Naive thymus-derived CD4-positive, alpha-beta T cell (primary cell): ENCODE measurements at regions of chr2 and their contacts with region 1.

Region 1: GRCh38 chr2:191189112-191189635 is 38.4 kb upstream of the STAT4 start:
- DNase-seq: peak in 3 of 9 donors; percentile 13 to 20 (median 14)
- ATAC-seq: no peak
- H3K4me3 ChIP-seq: peak overlapping the region; percentile 40
- H3K4me3 Mint-ChIP-seq: peak overlapping the region; percentile 70 to 91 (median 83)
- H3K27ac ChIP-seq: peak overlapping the region; percentile 21
- H3K27ac Mint-ChIP-seq: peak overlapping the region; percentile 59 to 95 (median 91)
- H3K4me1 ChIP-seq: peaks cover 19 to 20% of the 10 kb centered on the region in 2 donors
- H3K4me1 Mint-ChIP-seq: peaks cover 17 to 69% (median 61%) of the 10 kb centered on the region in 7 donors
- H3K27me3 ChIP-seq: no peaks in the 10 kb centered on the region
- H3K27me3 Mint-ChIP-seq: no peaks in the 10 kb centered on the region

Region 2: DNA sequence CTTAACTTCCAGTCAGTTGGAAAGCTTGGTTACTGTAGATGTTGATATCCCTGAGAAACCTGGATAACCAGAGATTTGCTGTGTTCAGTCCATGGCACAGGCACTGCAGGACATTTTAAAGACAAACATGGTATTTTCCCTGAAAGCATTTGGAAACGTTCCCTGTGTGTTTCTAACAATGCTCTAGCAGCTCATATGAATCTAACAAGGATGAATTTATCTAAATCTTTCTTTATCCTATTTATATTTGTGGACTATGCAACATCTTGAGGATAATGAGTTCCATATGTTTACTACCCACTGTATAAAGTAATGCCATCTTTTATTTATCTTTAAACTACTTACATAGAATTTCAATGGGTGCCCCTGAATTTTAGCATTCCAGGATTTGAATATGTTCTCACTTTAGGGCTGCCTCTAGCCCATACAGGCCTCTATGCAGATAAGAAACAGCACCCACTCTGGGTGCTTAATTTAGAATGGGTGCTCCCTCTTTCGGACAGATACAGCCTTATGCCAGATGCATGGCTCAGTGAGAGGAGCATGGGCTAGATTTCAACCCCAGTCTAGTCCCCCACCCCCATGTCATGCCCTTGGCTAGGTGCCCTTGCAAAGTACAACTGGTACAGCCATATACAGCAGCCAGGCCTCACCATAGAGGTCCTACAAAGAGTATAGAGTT is 604.1 kb before region 1 on chr2:
- CTCF ChIA-PET with region 1: no interaction called
- POLR2A ChIA-PET with region 1: no interaction called
- intact Hi-C with region 1: no loop called
- DNase-seq: no peak
- ATAC-seq: no peak
- H3K4me3 ChIP-seq: no peak overlapping the region
- H3K4me3 Mint-ChIP-seq: no peak overlapping the region
- H3K27ac ChIP-seq: no peak overlapping the region
- H3K27ac Mint-ChIP-seq: no peak overlapping the region
- H3K4me1 ChIP-seq: no peaks in the 10 kb centered on the region
- H3K4me1 Mint-ChIP-seq: no peaks in the 10 kb centered on the region
- H3K27me3 ChIP-seq: no peaks in the 10 kb centered on the region
- H3K27me3 Mint-ChIP-seq: no peaks in the 10 kb centered on the region

Region 3: GRCh38 chr2:191171708-191172355 is 17.3 kb before region 1 on chr2:
- CTCF ChIA-PET with region 1: no interaction called
- POLR2A ChIA-PET with region 1: no interaction called
- intact Hi-C with region 1: loop called in 1 of 2 experiments (anchors 1 kb)
- DNase-seq: no peak
- ATAC-seq: no peak
- H3K4me3 ChIP-seq: no peak overlapping the region
- H3K4me3 Mint-ChIP-seq: no peak overlapping the region
- H3K27ac ChIP-seq: no peak overlapping the region
- H3K27ac Mint-ChIP-seq: no peak overlapping the region
- H3K4me1 ChIP-seq: no peaks in the 10 kb centered on the region
- H3K4me1 Mint-ChIP-seq: peaks cover 0 to 52% (median 38%) of the 10 kb centered on the region in 7 donors
- H3K27me3 ChIP-seq: no peaks in the 10 kb centered on the region
- H3K27me3 Mint-ChIP-seq: peaks cover 0 to 4% (median 0%) of the 10 kb centered on the region in 5 donors

Region 4: GRCh38 chr2:191202881-191203397 is 13.8 kb after region 1 on chr2:
- CTCF ChIA-PET with region 1: no interaction called
- POLR2A ChIA-PET with region 1: interaction called, 8 read pairs
- intact Hi-C with region 1: loop called (anchors 1 kb)
- DNase-seq: no peak
- ATAC-seq: no peak
- H3K4me3 ChIP-seq: no peak overlapping the region
- H3K4me3 Mint-ChIP-seq: peak overlapping the region in 7 of 10 donors; percentile 6 to 62 (median 13)
- H3K27ac ChIP-seq: no peak overlapping the region
- H3K27ac Mint-ChIP-seq: peak overlapping the region in 5 of 9 donors; percentile 13 to 79 (median 37)
- H3K4me1 ChIP-seq: peaks cover 22 to 33% of the 10 kb centered on the region in 2 donors
- H3K4me1 Mint-ChIP-seq: peaks cover 25 to 54% (median 44%) of the 10 kb centered on the region in 7 donors
- H3K27me3 ChIP-seq: no peaks in the 10 kb centered on the region
- H3K27me3 Mint-ChIP-seq: no peaks in the 10 kb centered on the region

Region 5: GRCh38 chr2:192443831-192444230 is 1254.7 kb after region 1 on chr2:
- CTCF ChIA-PET with region 1: no interaction called
- POLR2A ChIA-PET with region 1: no interaction called
- intact Hi-C with region 1: no loop called
- DNase-seq: no peak
- ATAC-seq: no peak
- H3K4me3 ChIP-seq: no peak overlapping the region
- H3K4me3 Mint-ChIP-seq: no peak overlapping the region
- H3K27ac ChIP-seq: no peak overlapping the region
- H3K27ac Mint-ChIP-seq: no peak overlapping the region
- H3K4me1 ChIP-seq: no peaks in the 10 kb centered on the region
- H3K4me1 Mint-ChIP-seq: no peaks in the 10 kb centered on the region
- H3K27me3 ChIP-seq: no peaks in the 10 kb centered on the region
- H3K27me3 Mint-ChIP-seq: no peaks in the 10 kb centered on the region